ENCODE measurements at regions of chr7 and their contacts with region 1.

Region 1: DNA sequence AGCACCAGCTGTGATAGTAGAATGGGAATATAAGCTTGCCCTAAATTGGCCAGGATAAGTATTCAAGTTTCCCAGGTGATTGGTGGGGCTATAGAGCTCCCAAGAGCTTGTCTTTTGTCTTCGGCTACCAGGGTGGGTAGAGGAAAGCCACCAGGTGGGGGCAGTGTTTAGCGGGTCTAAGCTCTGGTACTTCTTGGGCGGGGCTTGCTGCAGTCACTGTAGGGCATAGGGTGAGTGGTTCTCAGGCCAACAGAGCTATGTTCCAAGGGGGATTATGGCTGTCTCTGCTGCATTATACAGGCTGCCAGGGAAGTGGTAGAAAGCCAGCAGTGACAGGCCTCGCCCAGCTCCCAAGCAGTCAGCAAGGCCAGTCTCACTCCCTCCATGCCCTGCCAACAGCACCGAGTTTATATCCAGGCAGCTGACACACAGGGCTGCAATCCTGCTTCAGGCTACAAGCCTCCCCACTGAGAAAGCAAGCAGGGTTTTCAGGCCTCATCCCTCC is 110.7 kb downstream of the ZNF467 start:
- DNase-seq: peak; percentile 82 to 96
- H3K4me3 ChIP-seq: no peak overlapping the region
- H3K27ac ChIP-seq: no peak overlapping the region
- H3K4me1 ChIP-seq: peaks cover 0 to 5% (median 3%) of the 10 kb centered on the region in 4 experiments; a peak in 4 of 7 replicates
- H3K27me3 ChIP-seq: no peaks in the 10 kb centered on the region
- CTCF ChIP-seq: peak; percentile 74 to 88 (median 83)
- EP300 ChIP-seq: no peak
- POLR2A ChIP-seq: no peak
- RAD21 ChIP-seq: peak; percentile 75 to 85

Region 2: DNA sequence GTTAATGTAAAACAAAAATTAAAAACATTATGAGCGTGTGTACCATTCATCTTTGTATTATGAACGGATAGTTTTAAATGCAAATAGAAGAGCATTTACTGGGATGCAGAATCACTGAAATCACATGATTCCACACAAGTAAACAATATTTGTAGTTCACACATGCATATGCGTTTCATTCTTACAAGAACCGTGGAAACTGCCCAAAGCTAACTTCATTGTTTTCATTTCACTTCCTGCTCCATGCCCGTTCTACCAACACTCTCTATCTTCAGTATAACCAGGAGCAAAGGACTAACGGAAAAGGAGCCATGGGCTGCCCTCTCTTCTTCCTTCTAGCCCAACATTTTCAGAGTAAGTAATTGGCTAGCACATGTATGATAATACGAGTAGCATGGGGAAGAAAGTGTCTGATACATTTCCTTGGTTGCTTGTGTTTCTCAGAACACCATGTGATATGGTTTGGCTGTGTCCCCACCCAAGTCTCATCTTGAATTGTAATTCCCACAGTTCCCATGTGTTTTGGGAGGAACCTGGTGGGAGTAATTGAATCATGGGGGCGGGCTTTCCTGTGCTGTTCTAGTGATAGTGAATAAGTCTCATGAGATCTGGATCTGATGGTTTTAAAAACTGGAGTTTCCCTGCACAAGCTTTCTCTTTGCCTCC is 361.9 kb before region 1 on chr7:
- CTCF ChIA-PET with region 1: no interaction called
- POLR2A ChIA-PET with region 1: no interaction called
- DNase-seq: peak in 1 of 2 experiments; percentile 16
- H3K4me3 ChIP-seq: no peak overlapping the region
- H3K27ac ChIP-seq: no peak overlapping the region
- H3K4me1 ChIP-seq: 0 out of 7 replicates have a peak, but pooled peaks cover 0 to 4% (median 0%) of the 10 kb centered on the region in 4 experiments
- H3K27me3 ChIP-seq: no peaks in the 10 kb centered on the region
- CTCF ChIP-seq: no peak
- EP300 ChIP-seq: no peak
- POLR2A ChIP-seq: no peak
- RAD21 ChIP-seq: no peak

Region 3: DNA sequence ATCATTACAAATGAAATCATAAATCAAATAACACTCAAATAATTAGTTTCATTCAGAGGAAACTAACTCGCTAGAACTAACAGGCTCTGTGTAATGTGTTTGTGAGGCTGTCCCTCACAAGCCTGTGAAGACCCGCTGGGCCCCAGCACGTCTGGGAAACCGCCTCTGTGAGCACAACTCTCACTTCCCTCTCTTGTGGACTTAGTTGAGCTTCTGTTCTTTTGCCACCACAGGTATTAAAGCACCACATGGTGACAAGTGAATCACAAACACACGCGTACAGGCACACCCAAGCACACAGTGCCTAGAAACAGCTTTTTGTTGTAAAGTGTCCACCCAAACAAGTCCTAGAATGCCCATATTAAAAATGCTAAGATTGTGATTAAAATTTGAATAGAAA is 252.7 kb before region 1 on chr7:
- CTCF ChIA-PET with region 1: no interaction called
- POLR2A ChIA-PET with region 1: no interaction called
- DNase-seq: no peak
- H3K4me3 ChIP-seq: no peak overlapping the region
- H3K27ac ChIP-seq: no peak overlapping the region
- H3K4me1 ChIP-seq: peaks cover 0 to 2% (median 0%) of the 10 kb centered on the region in 4 experiments; a peak in 1 of 7 replicates
- H3K27me3 ChIP-seq: no peaks in the 10 kb centered on the region
- CTCF ChIP-seq: no peak
- EP300 ChIP-seq: no peak
- POLR2A ChIP-seq: no peak
- RAD21 ChIP-seq: no peak

Region 4: GRCh38 chr7:149544028-149544427 is 118.6 kb before region 1 on chr7:
- CTCF ChIA-PET with region 1: no interaction called
- POLR2A ChIA-PET with region 1: no interaction called
- DNase-seq: no peak
- H3K4me3 ChIP-seq: no peak overlapping the region
- H3K27ac ChIP-seq: no peak overlapping the region
- H3K4me1 ChIP-seq: no peaks in the 10 kb centered on the region
- H3K27me3 ChIP-seq: no peaks in the 10 kb centered on the region; a peak in 1 of 7 replicates
- CTCF ChIP-seq: no peak
- EP300 ChIP-seq: no peak
- POLR2A ChIP-seq: no peak
- RAD21 ChIP-seq: no peak

Region 5: GRCh38 chr7:149680331-149681025 is 17.8 kb after region 1 on chr7:
- CTCF ChIA-PET with region 1: interaction called, 32 read pairs
- POLR2A ChIA-PET with region 1: no interaction called
- DNase-seq: no peak
- H3K4me3 ChIP-seq: no peak overlapping the region
- H3K27ac ChIP-seq: no peak overlapping the region
- H3K4me1 ChIP-seq: peaks cover 0 to 11% (median 4%) of the 10 kb centered on the region in 4 experiments; a peak in 3 of 7 replicates
- H3K27me3 ChIP-seq: no peaks in the 10 kb centered on the region
- CTCF ChIP-seq: no peak
- EP300 ChIP-seq: no peak
- POLR2A ChIP-seq: no peak
- RAD21 ChIP-seq: no peak

Region 6: GRCh38 chr7:149696280-149696679 is 33.6 kb after region 1 on chr7:
- CTCF ChIA-PET with region 1: interaction called, 16 read pairs
- POLR2A ChIA-PET with region 1: no interaction called
- DNase-seq: peak in 1 of 2 experiments; percentile 11
- H3K4me3 ChIP-seq: no peak overlapping the region
- H3K27ac ChIP-seq: no peak overlapping the region
- H3K4me1 ChIP-seq: no peaks in the 10 kb centered on the region
- H3K27me3 ChIP-seq: no peaks in the 10 kb centered on the region
- CTCF ChIP-seq: no peak
- EP300 ChIP-seq: no peak
- POLR2A ChIP-seq: no peak
- RAD21 ChIP-seq: no peak

Region 7: DNA sequence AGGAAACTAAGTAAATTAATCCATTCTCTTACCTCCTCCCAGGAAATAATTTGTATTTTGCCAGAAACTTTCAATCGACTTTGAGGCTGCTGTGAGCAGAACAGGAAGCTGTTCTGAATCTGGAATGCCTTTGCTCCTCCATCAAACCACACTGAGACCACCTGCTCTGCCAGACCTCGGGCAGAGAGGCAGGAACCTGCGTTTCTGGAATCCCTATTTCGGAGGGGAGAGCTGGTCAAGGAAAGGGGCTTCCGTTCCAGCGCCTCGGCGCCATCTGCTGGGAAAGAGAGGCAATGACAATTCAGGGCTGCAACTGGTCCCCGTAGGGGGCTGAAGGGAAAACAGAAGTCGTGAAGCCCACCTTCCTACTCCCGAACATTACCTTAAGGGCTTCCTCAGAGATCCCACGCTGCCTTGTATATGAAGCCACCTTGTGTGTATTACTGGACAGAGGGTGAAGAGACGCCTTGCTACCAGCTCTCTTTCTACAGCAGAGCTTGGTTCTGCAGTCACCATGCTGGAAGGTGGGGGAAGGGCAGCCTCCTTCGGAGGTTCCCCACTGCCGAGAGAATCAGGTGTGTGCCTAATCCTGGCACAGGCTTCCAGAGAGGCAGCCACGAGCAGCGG is 79.5 kb after region 1 on chr7:
- CTCF ChIA-PET with region 1: interaction called, 39 read pairs
- POLR2A ChIA-PET with region 1: interaction called, 4 read pairs
- DNase-seq: peak; percentile 57 to 93
- H3K4me3 ChIP-seq: peak overlapping the region; percentile 37 to 65 (median 58); a peak in 7 of 8 replicates
- H3K27ac ChIP-seq: no peak overlapping the region
- H3K4me1 ChIP-seq: peaks cover 0 to 4% (median 1%) of the 10 kb centered on the region in 4 experiments; a peak in 2 of 7 replicates
- H3K27me3 ChIP-seq: no peaks in the 10 kb centered on the region
- CTCF ChIP-seq: peak; percentile 81 to 92 (median 89)
- EP300 ChIP-seq: no peak
- POLR2A ChIP-seq: no peak
- RAD21 ChIP-seq: peak; percentile 82 to 87

Region 8: GRCh38 chr7:149799397-149800171 is 136.9 kb after region 1 on chr7:
- CTCF ChIA-PET with region 1: interaction called, 11 read pairs
- POLR2A ChIA-PET with region 1: no interaction called
- DNase-seq: peak in 1 of 2 experiments; percentile 91
- H3K4me3 ChIP-seq: no peak overlapping the region
- H3K27ac ChIP-seq: no peak overlapping the region
- H3K4me1 ChIP-seq: peaks cover 0 to 7% (median 5%) of the 10 kb centered on the region in 4 experiments; a peak in 6 of 7 replicates
- H3K27me3 ChIP-seq: no peaks in the 10 kb centered on the region
- CTCF ChIP-seq: peak in 2 of 3 experiments; percentile 73 to 89; a peak in 3 of 4 replicates
- EP300 ChIP-seq: no peak
- POLR2A ChIP-seq: no peak
- RAD21 ChIP-seq: peak; percentile 67 to 80